ENCODE measurements at regions of chr3 and their contacts with region 1.

Region 1: DNA sequence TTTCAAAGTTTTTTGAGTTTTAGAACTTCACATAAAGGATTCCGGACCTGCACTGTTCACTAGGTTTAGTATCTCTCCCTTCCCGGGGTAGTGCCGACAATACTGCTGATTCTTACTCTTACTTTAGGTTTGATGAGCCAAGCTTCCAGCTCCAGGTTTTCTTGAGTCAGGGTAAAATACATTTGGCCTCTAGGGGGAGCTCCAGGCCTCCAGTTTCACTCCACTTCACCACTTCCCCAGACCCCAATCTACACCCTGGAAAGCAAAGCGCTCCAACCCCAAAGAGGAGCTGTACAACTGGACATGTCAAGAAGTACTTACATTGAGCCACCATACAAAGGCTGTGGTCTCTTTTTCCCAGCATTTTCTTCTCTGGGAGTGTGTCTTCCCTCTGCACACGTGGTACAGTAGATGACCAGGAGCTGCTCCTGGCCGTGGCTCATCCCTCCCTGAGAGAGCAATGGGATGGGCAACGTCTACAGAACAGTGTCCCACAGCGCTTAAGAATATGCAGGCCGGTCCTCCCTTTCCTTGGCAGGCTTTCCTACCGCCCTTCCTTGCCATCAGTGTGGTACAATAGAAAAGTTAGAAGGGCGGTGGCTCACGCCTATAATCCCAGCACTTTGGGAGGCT is 93.9 kb upstream of the CCDC80 start:
- DNase-seq: peak; percentile 79
- H3K4me3 Mint-ChIP-seq: no peak overlapping the region
- H3K27ac Mint-ChIP-seq: no peak overlapping the region
- H3K4me1 Mint-ChIP-seq: peaks cover 39% of the 10 kb centered on the region
- H3K27me3 Mint-ChIP-seq: no peaks in the 10 kb centered on the region

Region 2: DNA sequence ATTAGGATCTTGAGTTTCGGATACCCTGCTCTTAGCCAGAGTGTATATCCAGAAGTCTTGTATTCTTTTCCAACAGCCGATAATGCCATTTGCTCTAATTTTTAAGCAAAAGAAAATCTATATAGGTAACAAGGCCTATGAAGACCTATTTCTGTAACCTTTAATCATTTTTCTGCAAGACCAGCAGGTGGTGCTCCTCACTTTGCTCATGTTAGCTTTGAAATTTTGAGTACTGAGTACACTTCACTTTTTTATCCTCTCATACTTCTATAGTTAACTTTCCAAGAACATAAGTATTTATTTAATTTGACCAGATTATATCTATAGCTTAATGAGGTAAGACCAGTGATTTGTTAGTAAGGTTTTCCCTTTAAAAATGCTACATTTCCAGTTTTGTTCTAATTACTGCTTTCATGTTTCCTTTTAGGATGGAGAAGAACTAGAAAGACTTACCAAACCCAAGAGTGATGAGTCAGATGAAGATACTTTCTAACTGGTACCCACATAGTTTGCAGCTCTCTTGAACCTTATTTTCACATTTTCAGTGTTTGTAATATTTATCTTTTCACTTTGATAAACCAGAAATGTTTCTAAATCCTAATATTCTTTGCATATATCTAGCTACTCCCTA is 152.5 kb before region 1 on chr3:
- CTCF ChIA-PET with region 1: interaction called, 14 read pairs
- intact Hi-C with region 1: loop called (anchors 1 kb)
- DNase-seq: peak; percentile 70
- H3K4me3 Mint-ChIP-seq: no peak overlapping the region
- H3K27ac Mint-ChIP-seq: no peak overlapping the region
- H3K4me1 Mint-ChIP-seq: peaks cover 6% of the 10 kb centered on the region
- H3K27me3 Mint-ChIP-seq: no peaks in the 10 kb centered on the region

Region 3: DNA sequence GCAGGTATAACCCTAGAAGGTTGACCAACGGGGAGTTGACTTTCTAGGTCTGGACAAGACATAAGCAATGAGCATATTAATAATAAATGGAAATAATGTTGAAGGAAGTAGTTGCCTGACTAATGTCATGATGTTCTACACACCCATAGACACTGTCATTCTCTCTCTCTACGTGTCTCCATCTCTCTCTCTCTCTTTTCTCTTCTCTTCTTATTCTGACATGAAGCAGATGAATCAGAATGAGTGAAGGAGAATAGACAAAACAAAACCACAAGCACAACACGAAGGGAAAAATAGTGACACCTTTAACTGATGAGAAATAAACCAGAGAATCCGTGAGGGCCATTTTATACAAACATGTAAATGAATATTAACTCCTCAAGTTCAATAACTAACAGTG is 67.2 kb before region 1 on chr3:
- CTCF ChIA-PET with region 1: no interaction called
- intact Hi-C with region 1: no loop called
- DNase-seq: no peak
- H3K4me3 Mint-ChIP-seq: no peak overlapping the region
- H3K27ac Mint-ChIP-seq: no peak overlapping the region
- H3K4me1 Mint-ChIP-seq: peaks cover 12% of the 10 kb centered on the region
- H3K27me3 Mint-ChIP-seq: peaks cover 2% of the 10 kb centered on the region

Region 4: DNA sequence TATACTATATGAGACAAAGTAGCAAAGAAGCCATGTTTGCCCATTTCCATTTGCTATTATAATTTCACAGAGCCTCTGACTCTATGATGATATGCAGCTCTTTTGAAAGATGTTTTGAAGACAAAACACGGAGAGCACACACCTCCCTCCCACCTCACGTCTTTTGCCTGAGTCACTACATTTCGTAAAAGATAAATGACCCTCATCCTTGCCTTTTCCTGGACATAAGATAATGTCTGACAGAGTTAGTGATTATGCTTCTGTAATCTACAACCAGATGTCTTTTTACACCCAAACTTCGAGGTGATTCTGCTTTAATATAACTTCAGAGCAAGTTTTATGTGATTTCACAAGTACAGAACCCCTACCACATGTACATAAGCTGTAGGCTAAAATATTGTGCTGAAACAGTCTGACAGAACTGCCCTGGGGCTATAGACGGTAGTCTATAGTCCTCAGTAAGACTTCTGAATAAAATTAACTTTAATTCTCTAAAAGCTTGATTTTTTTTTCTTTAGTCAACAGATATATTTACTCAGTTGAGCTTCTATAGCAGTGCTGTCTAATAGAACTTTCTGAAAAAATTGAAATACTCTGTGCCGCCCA is 11.9 kb after region 1 on chr3:
- CTCF ChIA-PET with region 1: interaction called, 20 read pairs
- intact Hi-C with region 1: loop called (anchors 1 kb)
- DNase-seq: no peak
- H3K4me3 Mint-ChIP-seq: no peak overlapping the region
- H3K27ac Mint-ChIP-seq: no peak overlapping the region
- H3K4me1 Mint-ChIP-seq: peaks cover 12% of the 10 kb centered on the region
- H3K27me3 Mint-ChIP-seq: no peaks in the 10 kb centered on the region

Region 5: DNA sequence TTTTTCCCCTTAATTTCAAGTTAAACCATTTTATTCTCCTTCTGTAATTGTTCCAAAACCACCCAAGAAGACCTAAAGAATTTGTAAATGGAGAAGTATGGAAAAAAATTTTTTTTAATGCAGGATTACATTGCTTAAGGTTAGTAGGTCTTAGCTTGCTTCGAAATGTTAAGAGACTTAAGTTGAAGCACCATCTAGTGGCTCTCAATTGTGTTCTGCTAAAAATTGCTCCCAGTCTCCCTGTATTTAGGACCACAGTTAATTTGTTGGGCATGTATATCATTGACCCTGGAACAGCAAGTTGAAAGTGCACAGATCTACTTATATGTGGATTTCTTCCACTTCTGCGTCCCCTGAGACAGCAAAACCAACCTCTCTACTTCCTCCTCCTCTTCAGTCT is 79.4 kb after region 1 on chr3:
- CTCF ChIA-PET with region 1: interaction called, 12 read pairs
- intact Hi-C with region 1: loop called (anchors 1 kb)
- DNase-seq: no peak
- H3K4me3 Mint-ChIP-seq: no peak overlapping the region
- H3K27ac Mint-ChIP-seq: no peak overlapping the region
- H3K4me1 Mint-ChIP-seq: peaks cover 8% of the 10 kb centered on the region
- H3K27me3 Mint-ChIP-seq: no peaks in the 10 kb centered on the region

Region 6: GRCh38 chr3:112979240-112979832 is 244.5 kb after region 1 on chr3:
- CTCF ChIA-PET with region 1: interaction called, 53 read pairs
- intact Hi-C with region 1: loop called (anchors 1 kb)
- DNase-seq: no peak
- H3K4me3 Mint-ChIP-seq: no peak overlapping the region
- H3K27ac Mint-ChIP-seq: no peak overlapping the region
- H3K4me1 Mint-ChIP-seq: peaks cover 64% of the 10 kb centered on the region
- H3K27me3 Mint-ChIP-seq: no peaks in the 10 kb centered on the region

Region 7: GRCh38 chr3:113287803-113288648 is 553.2 kb after region 1 on chr3:
- CTCF ChIA-PET with region 1: interaction called, 8 read pairs
- intact Hi-C with region 1: loop called (anchors 1 kb)
- DNase-seq: peak; percentile 67
- H3K4me3 Mint-ChIP-seq: no peak overlapping the region
- H3K27ac Mint-ChIP-seq: no peak overlapping the region
- H3K4me1 Mint-ChIP-seq: peaks cover 6% of the 10 kb centered on the region
- H3K27me3 Mint-ChIP-seq: no peaks in the 10 kb centered on the region

Region 8: GRCh38 chr3:113339616-113340244 is 604.9 kb after region 1 on chr3:
- CTCF ChIA-PET with region 1: no interaction called
- intact Hi-C with region 1: no loop called
- DNase-seq: no peak
- H3K4me3 Mint-ChIP-seq: no peak overlapping the region
- H3K27ac Mint-ChIP-seq: no peak overlapping the region
- H3K4me1 Mint-ChIP-seq: no peaks in the 10 kb centered on the region
- H3K27me3 Mint-ChIP-seq: no peaks in the 10 kb centered on the region

Measured in activated naive CD4-positive, alpha-beta T cell treated with anti-CD3 and anti-CD28 coated beads for 36 hours (primary cell).